ENCODE measurements at regions of chr22 and their contacts with region 1.

Region 1: GRCh38 chr22:35622191-35622913 is 5.2 kb upstream of the MB start:
- DNase-seq: no peak
- H3K4me3 Mint-ChIP-seq: no peak overlapping the region
- H3K27ac Mint-ChIP-seq: no peak overlapping the region
- H3K4me1 Mint-ChIP-seq: peaks cover 5% of the 10 kb centered on the region
- H3K27me3 Mint-ChIP-seq: no peaks in the 10 kb centered on the region

Region 2: DNA sequence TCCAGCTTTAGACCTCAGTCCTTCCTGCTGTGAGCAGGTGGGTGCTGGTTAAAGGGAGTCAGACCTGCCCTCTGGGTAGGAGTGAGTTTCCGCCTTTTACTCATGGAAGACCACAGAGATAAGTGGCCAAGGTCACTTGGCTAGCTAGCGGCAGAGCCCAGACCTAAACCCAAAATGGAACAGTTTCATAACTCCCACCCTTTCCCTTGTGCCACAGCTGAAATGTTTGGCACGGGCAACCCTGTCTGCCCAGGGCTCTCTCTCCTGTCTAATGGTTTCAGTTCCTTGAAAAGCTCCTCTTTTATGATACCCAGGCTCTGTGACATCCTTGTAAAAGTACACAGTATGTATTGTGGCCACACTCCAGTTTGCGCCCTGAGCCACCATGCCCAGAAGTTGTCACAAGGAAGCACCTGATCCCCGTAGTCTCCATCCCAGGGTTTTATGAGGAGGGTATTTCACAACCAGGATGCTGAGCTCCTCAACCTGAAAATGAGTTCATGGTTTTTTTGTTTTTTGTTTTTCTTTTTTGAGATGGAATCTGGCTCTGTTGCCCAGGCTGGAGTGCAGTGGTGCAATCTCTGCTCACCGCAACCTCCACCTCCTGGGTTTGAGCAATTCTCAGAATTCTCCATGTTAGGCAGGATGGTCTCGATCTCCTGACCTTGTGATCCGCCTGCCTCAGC is 10.3 kb before region 1 on chr22:
- CTCF ChIA-PET with region 1: interaction called, 10 read pairs
- intact Hi-C with region 1: no loop called
- DNase-seq: no peak
- H3K4me3 Mint-ChIP-seq: no peak overlapping the region
- H3K27ac Mint-ChIP-seq: no peak overlapping the region
- H3K4me1 Mint-ChIP-seq: peaks cover 13% of the 10 kb centered on the region
- H3K27me3 Mint-ChIP-seq: peaks cover 3% of the 10 kb centered on the region

Region 3: DNA sequence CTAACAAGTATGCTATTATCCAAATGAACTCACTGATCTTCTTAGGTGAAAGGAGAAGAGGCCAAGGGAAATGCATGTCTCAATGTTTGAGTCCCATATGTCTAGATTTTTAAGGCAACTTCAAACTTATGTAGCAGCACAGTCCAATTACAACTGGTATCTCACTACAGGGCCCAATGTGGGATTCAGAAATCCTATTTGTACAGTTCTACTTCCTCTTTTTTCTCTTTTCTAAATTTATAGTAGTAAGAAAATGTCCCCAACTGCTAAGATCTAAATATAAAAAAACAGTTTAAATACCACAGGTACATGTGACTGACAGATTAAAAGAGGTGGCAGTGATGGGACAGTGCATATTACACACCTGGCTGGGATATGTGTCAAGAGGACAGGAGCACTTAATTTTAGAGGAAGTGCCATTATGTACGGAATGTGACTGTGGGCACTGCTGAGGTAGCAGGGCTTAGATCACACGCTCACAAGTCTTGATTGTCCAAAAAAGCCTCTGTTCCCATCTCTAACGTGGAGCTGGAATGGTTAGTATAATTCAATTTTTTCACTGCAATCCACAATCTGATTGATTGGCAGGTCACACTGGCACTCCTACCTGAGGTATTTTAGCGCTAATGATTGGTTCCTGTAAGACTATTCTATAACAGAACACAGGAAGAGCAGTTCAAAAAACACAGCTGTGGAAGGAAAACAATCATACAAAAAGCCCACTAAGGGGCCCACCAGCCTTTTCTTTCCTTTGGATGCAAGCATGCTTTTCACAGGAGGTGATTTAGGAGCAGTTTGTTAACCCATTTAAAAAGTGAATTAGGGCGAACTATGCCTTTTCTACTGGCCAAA is 129.9 kb after region 1 on chr22:
- CTCF ChIA-PET with region 1: no interaction called
- intact Hi-C with region 1: no loop called
- DNase-seq: no peak
- H3K4me3 Mint-ChIP-seq: no peak overlapping the region
- H3K27ac Mint-ChIP-seq: no peak overlapping the region
- H3K4me1 Mint-ChIP-seq: peaks cover 2% of the 10 kb centered on the region
- H3K27me3 Mint-ChIP-seq: no peaks in the 10 kb centered on the region